Heart left ventricle (tissue), 16 donors: ENCODE measurements at regions of chr10 and their contacts with region 1.

Region 1: DNA sequence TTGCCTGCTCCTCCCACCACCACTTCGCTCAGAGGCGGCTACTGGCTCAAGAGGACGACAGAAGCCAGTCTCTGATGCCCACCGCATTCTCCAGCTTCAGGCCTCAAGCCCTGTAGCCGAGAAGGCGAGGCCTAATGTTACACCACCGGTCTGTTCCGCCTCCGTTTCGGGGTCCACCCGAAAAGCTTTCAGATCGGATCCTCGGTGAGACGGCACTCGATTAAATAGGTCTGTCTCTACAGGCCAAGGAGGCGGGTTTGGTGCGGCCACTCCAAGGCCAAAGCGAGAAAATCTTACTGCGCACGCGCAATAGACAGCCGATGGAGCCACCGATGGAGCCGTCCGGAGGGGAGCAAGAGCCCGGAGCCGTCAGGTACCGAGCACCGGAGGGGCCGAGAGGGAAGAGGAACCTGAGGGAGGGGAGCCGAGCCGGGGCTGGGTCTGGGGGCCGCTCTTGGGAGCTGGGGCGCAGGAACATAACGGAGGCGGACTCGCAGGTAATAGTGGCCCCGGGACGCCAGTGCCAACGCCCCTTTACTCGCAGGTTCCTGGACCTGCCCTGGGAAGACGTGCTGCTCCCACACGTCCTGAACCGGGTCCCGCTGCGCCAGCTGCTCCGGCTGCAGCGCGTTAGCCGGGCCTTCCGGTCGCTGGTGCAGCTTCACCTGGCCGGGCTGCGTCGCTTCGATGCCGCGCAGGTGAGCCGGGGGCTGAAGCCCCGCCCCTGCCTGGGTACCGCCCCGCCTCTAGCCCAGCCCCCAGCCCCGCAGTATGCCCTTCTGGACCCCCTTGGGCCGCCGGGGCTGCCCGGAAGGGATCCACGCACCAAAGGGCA is at the start of gene FBXL15:
- DNase-seq: peak; percentile 96 to 99 (median 97)
- ATAC-seq: peak; percentile 87 to 94 (median 90)
- H3K4me3 ChIP-seq: peak within 1 kb of the TSS; percentile 52 to 99 (median 88)
- H3K27ac ChIP-seq: peak within 1 kb of the TSS; percentile 61 to 96 (median 90)
- H3K4me1 ChIP-seq: peaks cover 6 to 45% (median 28%) of the 10 kb centered on the region in 12 donors
- H3K27me3 ChIP-seq: peaks cover 0 to 27% (median 8%) of the 10 kb centered on the region in 9 donors
- CTCF ChIP-seq: peak in 1 of 12 donors; percentile 5
- POLR2A ChIP-seq: peak in 1 of 2 donors; percentile 41
- total RNA-seq, gene FBXL15: 6.6 to 13.9 (median 10.2) TPM

Region 2: DNA sequence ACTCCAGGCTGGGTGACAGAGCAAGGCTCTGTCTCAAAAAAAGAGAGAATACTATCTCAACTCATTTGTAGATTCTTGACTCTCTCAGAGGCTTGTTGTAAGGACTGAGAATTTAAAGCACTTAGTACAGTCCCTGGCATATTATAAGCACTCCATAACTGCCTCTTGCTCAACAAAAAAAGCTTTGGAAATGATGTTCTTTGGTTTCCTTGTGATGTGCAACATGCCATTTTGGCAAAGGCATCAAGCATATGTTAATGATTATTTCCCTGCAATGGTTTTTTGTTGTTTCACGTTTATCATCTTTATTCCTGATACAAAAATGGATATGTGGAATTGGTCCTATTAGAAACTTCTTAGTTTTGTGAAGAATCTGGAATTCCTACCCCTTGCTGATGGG is 253.2 kb before region 1 on chr10:
- intact Hi-C with region 1: loop called in 1 of 10 experiments (anchors 10 kb)
- DNase-seq: no peak
- ATAC-seq: no peak
- H3K4me3 ChIP-seq: no peak overlapping the region
- H3K27ac ChIP-seq: no peak overlapping the region
- H3K4me1 ChIP-seq: peaks cover 0 to 12% (median 2%) of the 10 kb centered on the region in 12 donors
- H3K27me3 ChIP-seq: no peaks in the 10 kb centered on the region
- CTCF ChIP-seq: no peak
- POLR2A ChIP-seq: no peak

Region 3: DNA sequence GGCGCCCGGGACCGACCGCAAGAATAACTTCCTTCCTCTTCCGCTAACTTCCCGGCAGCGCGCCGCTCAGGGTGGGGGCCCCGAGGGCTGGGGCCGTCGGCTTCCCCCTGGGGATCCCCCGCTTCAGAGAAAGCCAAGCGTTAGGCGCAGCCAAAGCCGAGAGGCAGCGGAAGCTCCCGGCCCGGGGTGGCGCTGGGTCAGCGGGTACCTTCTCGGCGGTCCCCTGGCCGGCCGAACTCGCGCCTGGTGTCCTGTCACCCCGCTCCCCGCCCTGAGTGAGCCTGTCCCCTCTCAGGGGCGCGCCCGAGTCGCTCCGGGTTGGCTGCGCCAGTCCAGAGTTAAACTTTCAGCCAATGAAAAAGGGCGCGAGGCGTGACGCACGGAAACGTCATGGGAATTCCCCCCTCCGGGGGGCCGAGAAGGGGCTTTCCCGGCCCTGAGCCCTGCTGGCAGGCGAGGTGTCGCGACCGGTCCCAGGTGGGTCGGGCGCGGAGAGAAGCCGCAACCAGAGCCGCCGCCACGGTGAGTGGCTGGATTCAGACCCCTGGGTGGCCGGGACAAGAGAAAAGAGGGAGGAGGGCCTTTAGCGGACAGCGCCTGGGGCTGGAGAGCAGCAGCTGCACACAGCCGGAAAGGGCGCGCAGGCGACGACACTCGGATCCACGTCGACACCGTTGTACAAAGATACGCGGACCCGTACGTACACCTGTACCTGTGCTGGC is 26.8 kb before region 1 on chr10:
- intact Hi-C with region 1: loop called in 4 of 10 experiments (anchors 1 to 2 kb)
- DNase-seq: peak; percentile 96 to 98 (median 97)
- ATAC-seq: peak; percentile 84 to 94 (median 92)
- H3K4me3 ChIP-seq: peak overlapping the region; percentile 50 to 91 (median 75)
- H3K27ac ChIP-seq: peak overlapping the region; percentile 89 to 99 (median 96)
- H3K4me1 ChIP-seq: peaks cover 3 to 42% (median 26%) of the 10 kb centered on the region in 12 donors
- H3K27me3 ChIP-seq: no peaks in the 10 kb centered on the region
- CTCF ChIP-seq: peak in 10 of 12 donors; percentile 1 to 98 (median 94)
- POLR2A ChIP-seq: peak in 1 of 2 donors; percentile 81

Region 4: DNA sequence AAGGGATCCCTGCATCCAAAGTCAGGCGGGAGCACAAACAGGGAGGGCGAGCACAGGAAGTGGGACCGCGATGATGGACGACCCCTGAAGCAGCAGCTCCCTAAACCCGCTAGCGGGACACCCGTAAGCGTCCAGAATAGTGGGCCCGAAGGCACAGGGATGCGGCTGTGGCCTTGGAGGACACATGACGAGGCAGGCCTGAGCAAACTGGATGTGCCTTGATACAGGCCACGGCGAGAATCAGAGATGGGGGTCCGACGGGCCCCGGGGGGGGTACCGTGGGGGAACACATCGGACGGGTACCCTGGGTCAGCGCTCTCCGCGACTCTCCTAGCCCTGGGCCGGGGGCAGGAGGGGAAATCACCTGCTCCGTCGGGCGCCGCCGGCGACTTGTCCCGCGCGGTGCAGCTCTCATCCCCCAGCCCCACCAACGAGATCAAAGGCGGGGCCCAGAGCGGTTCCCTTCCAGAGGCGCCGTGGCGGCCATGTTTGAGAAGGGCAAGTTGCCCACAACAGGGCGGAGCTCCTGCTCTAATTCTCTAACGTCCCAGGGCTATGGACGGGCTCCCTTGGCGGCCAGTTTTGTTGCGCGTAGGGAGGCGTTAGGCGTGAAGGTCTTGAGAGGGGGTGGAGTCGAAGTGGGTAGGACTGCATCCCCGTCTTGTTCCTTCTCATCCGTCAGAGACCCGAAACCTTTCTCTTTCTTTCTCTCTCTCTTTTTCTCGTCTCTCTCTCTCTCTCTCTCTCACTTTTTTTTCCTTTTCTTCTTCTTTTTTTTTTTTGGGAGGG is 11.3 kb after region 1 on chr10 and contains the start of gene CUEDC2:
- intact Hi-C with region 1: loop called in 1 of 10 experiments (anchors 1 kb)
- DNase-seq: peak; percentile 96 to 98 (median 97)
- ATAC-seq: peak; percentile 96 to 98 (median 96)
- H3K4me3 ChIP-seq: peak within 1 kb of the TSS; percentile 67 to 99 (median 91)
- H3K27ac ChIP-seq: peak within 1 kb of the TSS; percentile 43 to 91 (median 88)
- H3K4me1 ChIP-seq: peaks cover 0 to 55% (median 12%) of the 10 kb centered on the region in 12 donors
- H3K27me3 ChIP-seq: peaks cover 0 to 12% (median 0%) of the 10 kb centered on the region in 9 donors
- CTCF ChIP-seq: no peak
- POLR2A ChIP-seq: peak in 1 of 2 donors; percentile 66
- total RNA-seq, gene CUEDC2: 62.0 to 107 (median 79.2) TPM

Region 5: GRCh38 chr10:102461187-102462054 is 40.4 kb after region 1 on chr10:
- intact Hi-C with region 1: loop called in 1 of 10 experiments (anchors 5 kb)
- DNase-seq: peak; percentile 91 to 97 (median 93)
- ATAC-seq: peak; percentile 90 to 99 (median 96)
- H3K4me3 ChIP-seq: peak overlapping the region; percentile 29 to 87 (median 60)
- H3K27ac ChIP-seq: peak overlapping the region in 7 of 12 donors; percentile 0 to 62 (median 22)
- H3K4me1 ChIP-seq: peaks cover 0 to 29% (median 14%) of the 10 kb centered on the region in 12 donors
- H3K27me3 ChIP-seq: no peaks in the 10 kb centered on the region
- CTCF ChIP-seq: no peak
- POLR2A ChIP-seq: peak in 1 of 2 donors; percentile 58

Region 6: DNA sequence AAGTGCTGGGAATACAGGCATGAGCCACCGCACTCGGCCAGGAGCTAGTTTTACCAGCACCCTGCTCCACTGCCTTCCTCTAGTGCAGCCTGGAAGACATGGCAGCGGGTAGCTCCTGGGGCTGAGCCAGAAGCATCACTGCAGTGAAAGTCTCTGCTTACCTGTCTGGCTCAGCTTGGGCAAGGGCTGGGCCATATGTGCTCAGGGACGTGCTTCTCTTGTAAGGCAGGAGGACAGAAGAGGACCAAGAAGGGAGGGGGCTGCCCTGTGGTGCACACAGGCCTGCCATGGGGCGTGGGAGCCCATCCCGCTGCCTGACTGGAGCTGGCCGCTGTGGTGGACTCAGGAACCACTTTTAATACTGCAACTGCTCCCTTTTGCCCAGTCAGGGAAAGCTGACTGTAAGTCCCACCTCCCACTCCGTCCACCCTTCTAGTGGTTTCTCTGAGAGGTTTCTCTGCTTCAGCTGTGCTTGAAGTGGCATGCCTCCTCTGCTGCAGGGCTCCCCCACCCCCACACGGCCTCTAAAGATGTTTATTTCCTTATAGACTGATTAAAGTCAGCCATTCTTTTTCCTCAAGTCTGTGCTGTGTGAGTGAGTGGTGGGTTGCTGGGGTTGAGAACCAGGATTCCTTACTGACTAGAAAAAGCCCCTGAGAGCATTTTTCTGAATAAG is 55.6 kb after region 1 on chr10:
- intact Hi-C with region 1: loop called in 2 of 10 experiments (anchors 2 to 5 kb)
- DNase-seq: peak in 2 of 5 donors; percentile 20 to 23
- ATAC-seq: no peak
- H3K4me3 ChIP-seq: no peak overlapping the region
- H3K27ac ChIP-seq: no peak overlapping the region
- H3K4me1 ChIP-seq: peaks cover 0 to 18% (median 6%) of the 10 kb centered on the region in 12 donors
- H3K27me3 ChIP-seq: no peaks in the 10 kb centered on the region
- CTCF ChIP-seq: no peak
- POLR2A ChIP-seq: no peak

Region 7: GRCh38 chr10:103491493-103492381 is 1070.7 kb after region 1 on chr10:
- intact Hi-C with region 1: no loop called
- DNase-seq: peak in 1 of 5 donors; percentile 22
- ATAC-seq: peak; percentile 43 to 64 (median 52)
- H3K4me3 ChIP-seq: no peak overlapping the region
- H3K27ac ChIP-seq: peak overlapping the region in 1 of 12 donors; percentile 9
- H3K4me1 ChIP-seq: peaks cover 0 to 30% (median 7%) of the 10 kb centered on the region in 12 donors
- H3K27me3 ChIP-seq: peaks cover 0 to 37% (median 9%) of the 10 kb centered on the region in 9 donors
- CTCF ChIP-seq: no peak
- POLR2A ChIP-seq: no peak